ENCODE measurements at regions of chr17 and their contacts with region 1.

Region 1: DNA sequence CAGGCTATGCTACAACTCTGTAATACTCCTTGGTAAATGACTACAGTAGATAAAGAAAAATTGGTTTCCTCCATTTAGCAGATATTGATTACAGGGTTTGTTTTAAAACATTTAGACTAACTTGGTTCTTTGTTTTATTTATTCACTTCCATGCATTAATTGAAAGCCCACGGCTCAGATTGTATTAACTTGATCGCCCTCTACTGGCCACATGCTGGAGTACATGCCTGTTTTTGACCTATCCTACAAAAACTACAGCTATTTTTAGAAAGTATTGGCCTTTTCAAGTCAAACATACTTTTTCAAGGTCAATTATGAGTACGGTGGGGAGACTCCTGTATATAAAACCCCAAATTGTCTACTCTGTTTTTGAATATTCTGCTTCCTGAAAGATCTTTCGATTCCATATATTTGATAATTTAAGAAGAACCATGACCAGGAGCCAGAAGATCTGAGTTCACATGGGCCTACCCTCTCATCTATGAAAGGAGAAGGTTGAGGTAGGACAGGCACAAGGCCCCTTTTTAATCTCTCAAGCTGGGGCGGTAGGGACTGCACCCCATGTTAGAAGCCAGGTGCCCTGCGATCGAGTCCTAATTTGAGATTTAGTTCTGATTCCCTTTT is 51.8 kb downstream of the CA10 start:
- DNase-seq: peak; percentile 19
- ATAC-seq: peak; percentile 50; the same call in 1 of the 2 replicates
- H3K4me3 ChIP-seq: no peak overlapping the region
- H3K27ac ChIP-seq: no peak overlapping the region
- H3K4me1 ChIP-seq: no peaks in the 10 kb centered on the region
- H3K27me3 ChIP-seq: no peaks in the 10 kb centered on the region
- CTCF ChIP-seq: peak; percentile 24 to 96 (median 70); a peak in 4 of 6 replicates
- POLR2A ChIP-seq: no peak
- RAD21 ChIP-seq: peak; percentile 55

Region 2: GRCh38 chr17:51764387-51764972 is 342.3 kb before region 1 on chr17:
- CTCF ChIA-PET with region 1: interaction called, 11 read pairs
- POLR2A ChIA-PET with region 1: no interaction called
- RAD21 ChIA-PET with region 1: interaction called in 1 of 2 experiments, 4 read pairs
- intact Hi-C with region 1: loop called (anchors 1 kb)
- DNase-seq: peak; percentile 68
- ATAC-seq: peak; percentile 99
- H3K4me3 ChIP-seq: no peak overlapping the region
- H3K27ac ChIP-seq: no peak overlapping the region
- H3K4me1 ChIP-seq: no peaks in the 10 kb centered on the region
- H3K27me3 ChIP-seq: peaks cover 11% of the 10 kb centered on the region; the same call in 1 of the 2 replicates
- CTCF ChIP-seq: peak; percentile 53 to 98 (median 96); a peak in 5 of 6 replicates
- POLR2A ChIP-seq: no peak
- RAD21 ChIP-seq: peak; percentile 82